Activated CD4-positive, alpha-beta memory T cell treated with anti-CD3 and anti-CD28 coated beads for 36 hours (primary cell): ENCODE measurements at regions of chr6 and their contacts with region 1.

Region 1: DNA sequence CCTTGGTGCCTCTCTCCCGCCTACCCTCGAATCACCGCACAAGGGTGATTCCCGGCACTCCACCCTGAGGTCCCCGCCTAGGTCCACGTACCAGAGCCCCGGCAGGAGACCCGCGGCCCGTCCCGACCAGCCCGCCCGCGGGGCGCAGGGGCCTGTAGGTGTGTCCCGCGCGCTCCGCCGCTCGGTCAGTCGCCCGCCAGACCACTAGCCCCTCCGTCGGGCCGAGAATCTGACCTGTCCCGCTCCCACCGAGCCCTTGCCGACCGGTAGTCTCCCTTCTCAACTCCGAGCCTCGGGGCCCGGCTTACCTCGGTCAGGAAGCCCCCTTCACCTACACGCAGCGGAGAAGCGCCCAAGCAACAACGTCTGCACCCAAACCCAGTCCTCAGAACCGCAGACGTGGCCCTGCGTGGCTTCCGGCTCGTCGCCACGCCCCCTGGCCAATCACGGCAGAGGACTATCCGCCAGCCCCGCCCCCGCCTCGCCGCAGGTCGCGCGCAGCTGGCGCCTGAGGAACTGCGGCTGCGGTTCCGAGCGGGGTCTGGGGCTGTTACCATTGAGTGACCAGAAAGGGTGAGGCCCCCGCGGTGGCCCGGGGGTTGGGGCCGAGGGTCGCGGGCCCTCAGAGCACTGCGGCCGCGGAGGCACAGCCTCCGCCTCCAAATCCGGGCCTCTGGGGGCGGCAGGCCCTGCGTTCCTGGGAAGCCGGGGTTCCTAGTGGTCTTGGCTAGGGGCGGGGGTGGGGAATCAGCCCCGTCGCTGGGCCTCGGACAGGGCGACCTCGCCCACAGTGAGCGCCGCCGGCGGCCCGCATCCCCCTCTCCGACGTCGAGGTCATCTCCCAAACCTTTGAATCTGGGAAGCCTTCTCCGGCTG is at the starts of genes PGM3 and RWDD2A:
- DNase-seq: peak; percentile 93
- H3K4me3 Mint-ChIP-seq: peak within 1 kb of the TSS; percentile 95
- H3K27ac Mint-ChIP-seq: peak within 1 kb of the TSS; percentile 92
- H3K4me1 Mint-ChIP-seq: peaks cover 44% of the 10 kb centered on the region
- H3K27me3 Mint-ChIP-seq: no peaks in the 10 kb centered on the region
- total RNA-seq, gene PGM3: 20.7 to 24.6 TPM
- total RNA-seq, gene RWDD2A: 2.6 TPM

Region 2: GRCh38 chr6:82247634-82248232 is 945.4 kb before region 1 on chr6 and contains the start of gene IBTK:
- CTCF ChIA-PET with region 1: no interaction called
- POLR2A ChIA-PET with region 1: no interaction called
- intact Hi-C with region 1: loop called (anchors 1 kb)
- DNase-seq: peak; percentile 95
- H3K4me3 Mint-ChIP-seq: peak within 1 kb of the TSS; percentile 89
- H3K27ac Mint-ChIP-seq: peak within 1 kb of the TSS; percentile 90
- H3K4me1 Mint-ChIP-seq: peaks cover 27% of the 10 kb centered on the region
- H3K27me3 Mint-ChIP-seq: no peaks in the 10 kb centered on the region
- total RNA-seq, gene IBTK: 30.7 to 32.1 TPM

Region 3: GRCh38 chr6:83215131-83216047 is 22.3 kb after region 1 on chr6:
- CTCF ChIA-PET with region 1: interaction called, 6 read pairs
- POLR2A ChIA-PET with region 1: no interaction called
- intact Hi-C with region 1: loop called (anchors 1 kb)
- DNase-seq: peak; percentile 70
- H3K4me3 Mint-ChIP-seq: no peak overlapping the region
- H3K27ac Mint-ChIP-seq: no peak overlapping the region
- H3K4me1 Mint-ChIP-seq: no peaks in the 10 kb centered on the region
- H3K27me3 Mint-ChIP-seq: peaks cover 5% of the 10 kb centered on the region